MCF 10A (cell line): ENCODE measurements at regions of chr11 and their contacts with region 1.

Region 1: DNA sequence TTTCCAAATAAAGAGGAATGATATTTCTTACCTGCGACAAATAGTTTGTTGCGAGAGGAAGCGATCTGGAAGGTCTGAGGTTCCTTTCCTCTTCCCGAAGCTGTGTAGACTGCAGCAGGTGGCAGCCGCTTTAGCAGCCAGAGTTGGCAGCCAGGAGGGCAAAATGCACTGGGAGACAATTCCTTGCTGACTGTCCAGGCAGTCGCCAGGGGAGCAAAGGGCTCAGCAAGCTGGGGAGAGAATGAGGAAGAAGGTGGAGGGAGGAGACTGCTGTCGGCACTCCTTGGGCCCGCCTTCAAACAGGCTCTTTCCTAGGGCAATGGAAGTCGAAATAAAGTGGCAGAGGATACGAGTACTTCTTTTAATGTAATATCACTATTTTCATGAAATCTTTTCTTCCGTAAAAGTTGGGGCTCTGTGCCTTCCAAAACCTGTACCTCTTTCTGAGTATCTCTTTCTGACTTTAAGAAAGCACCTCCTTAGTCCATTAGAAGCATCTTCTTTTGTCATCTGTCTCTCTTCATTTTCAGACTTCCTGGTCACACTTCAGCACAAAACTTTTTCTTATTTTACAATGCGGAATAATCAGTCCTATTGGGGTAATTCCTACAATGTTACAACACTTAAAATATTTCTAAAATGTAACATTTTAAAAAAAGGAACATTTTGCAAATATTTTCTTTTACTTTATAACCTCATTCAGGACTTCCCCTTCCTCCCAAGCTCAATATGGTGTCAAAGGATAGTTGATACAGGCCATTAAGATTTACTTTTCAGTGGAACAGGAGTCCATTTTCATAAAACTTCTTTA is at the start of gene IL18:
- DNase-seq: peak; percentile 88
- H3K4me3 Mint-ChIP-seq: peak within 1 kb of the TSS; percentile 96
- H3K27ac Mint-ChIP-seq: peak within 1 kb of the TSS; percentile 97
- H3K4me1 Mint-ChIP-seq: peaks cover 53% of the 10 kb centered on the region
- H3K27me3 Mint-ChIP-seq: no peaks in the 10 kb centered on the region
- CTCF ChIP-seq: no peak
- total RNA-seq, gene IL18: 124 and 189 TPM in 2 replicates

Region 2: GRCh38 chr11:112074026-112074811 is 89.9 kb before region 1 on chr11 and contains the start of gene NKAPD1:
- CTCF ChIA-PET with region 1: no interaction called
- POLR2A ChIA-PET with region 1: interaction called, 10 read pairs
- intact Hi-C with region 1: no loop called
- DNase-seq: peak; percentile 82
- H3K4me3 Mint-ChIP-seq: peak within 1 kb of the TSS; percentile 82
- H3K27ac Mint-ChIP-seq: peak within 1 kb of the TSS; percentile 99
- H3K4me1 Mint-ChIP-seq: peaks cover 26% of the 10 kb centered on the region
- H3K27me3 Mint-ChIP-seq: no peaks in the 10 kb centered on the region
- CTCF ChIP-seq: no peak
- total RNA-seq, gene NKAPD1: 25.1 and 27.5 TPM in 2 replicates

Region 3: GRCh38 chr11:112121981-112122615 is 42.0 kb before region 1 on chr11:
- CTCF ChIA-PET with region 1: interaction called, 6 read pairs
- POLR2A ChIA-PET with region 1: interaction called, 73 read pairs
- intact Hi-C with region 1: no loop called
- DNase-seq: no peak
- H3K4me3 Mint-ChIP-seq: no peak overlapping the region
- H3K27ac Mint-ChIP-seq: no peak overlapping the region
- H3K4me1 Mint-ChIP-seq: peaks cover 9% of the 10 kb centered on the region
- H3K27me3 Mint-ChIP-seq: no peaks in the 10 kb centered on the region
- CTCF ChIP-seq: no peak

Region 4: GRCh38 chr11:112174789-112175598 is 10.9 kb after region 1 on chr11 and contains the start of gene BCO2:
- CTCF ChIA-PET with region 1: interaction called, 4 read pairs
- POLR2A ChIA-PET with region 1: interaction called, 22 read pairs
- intact Hi-C with region 1: no loop called
- DNase-seq: peak; percentile 83
- H3K4me3 Mint-ChIP-seq: peak within 1 kb of the TSS; percentile 66
- H3K27ac Mint-ChIP-seq: peak within 1 kb of the TSS; percentile 93
- H3K4me1 Mint-ChIP-seq: peaks cover 15% of the 10 kb centered on the region
- H3K27me3 Mint-ChIP-seq: no peaks in the 10 kb centered on the region
- CTCF ChIP-seq: peak; percentile 83
- total RNA-seq, gene BCO2: 0.93 TPM in 1 of 2 replicates, not detected in the other